A673 (cell line): ENCODE measurements at regions of chr4 and their contacts with region 1.

Region 1: DNA sequence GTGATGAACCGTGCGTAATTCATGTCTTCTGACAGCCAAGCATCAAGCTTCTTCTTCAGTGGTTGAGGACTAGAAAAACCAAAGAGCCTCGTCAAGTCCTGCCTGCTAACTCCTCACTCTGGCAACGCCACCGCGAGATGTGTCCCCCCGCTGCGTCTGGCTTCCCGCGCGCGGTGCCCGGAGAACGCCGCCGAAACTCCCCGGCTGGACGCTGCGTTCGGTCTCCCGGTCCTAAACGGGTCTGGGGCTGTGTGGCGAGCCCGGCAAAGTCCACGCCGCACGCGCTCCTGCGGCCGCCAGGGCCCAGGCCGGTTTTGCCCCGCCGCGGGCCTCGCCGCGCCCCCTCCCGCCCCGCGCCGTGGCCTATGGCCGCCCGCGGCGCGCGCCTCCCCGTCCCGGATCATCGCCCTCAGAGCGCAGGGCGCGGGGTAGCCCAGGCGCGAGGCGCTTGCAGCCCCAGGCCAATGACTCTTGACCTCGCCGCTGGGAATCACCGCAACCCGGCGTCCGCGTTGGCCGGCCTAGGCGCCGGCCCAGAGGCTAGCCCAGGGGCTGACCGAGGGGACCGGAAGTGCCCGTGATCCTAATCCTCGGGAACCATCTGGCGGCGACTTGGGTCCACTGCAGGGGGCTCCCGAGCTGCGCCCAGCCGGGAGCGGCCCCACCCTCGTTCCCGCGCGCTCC is at the start of gene AADAT:
- DNase-seq: peak; percentile 70
- H3K4me3 ChIP-seq: peak within 1 kb of the TSS; percentile 57
- H3K27ac ChIP-seq: peak within 1 kb of the TSS; percentile 38
- H3K4me1 ChIP-seq: peaks cover 33% of the 10 kb centered on the region
- H3K27me3 ChIP-seq: peaks cover 29% of the 10 kb centered on the region
- CTCF ChIP-seq: peak; percentile 74
- total RNA-seq, gene AADAT: 5.4 and 5.6 TPM in 2 replicates

Region 2: DNA sequence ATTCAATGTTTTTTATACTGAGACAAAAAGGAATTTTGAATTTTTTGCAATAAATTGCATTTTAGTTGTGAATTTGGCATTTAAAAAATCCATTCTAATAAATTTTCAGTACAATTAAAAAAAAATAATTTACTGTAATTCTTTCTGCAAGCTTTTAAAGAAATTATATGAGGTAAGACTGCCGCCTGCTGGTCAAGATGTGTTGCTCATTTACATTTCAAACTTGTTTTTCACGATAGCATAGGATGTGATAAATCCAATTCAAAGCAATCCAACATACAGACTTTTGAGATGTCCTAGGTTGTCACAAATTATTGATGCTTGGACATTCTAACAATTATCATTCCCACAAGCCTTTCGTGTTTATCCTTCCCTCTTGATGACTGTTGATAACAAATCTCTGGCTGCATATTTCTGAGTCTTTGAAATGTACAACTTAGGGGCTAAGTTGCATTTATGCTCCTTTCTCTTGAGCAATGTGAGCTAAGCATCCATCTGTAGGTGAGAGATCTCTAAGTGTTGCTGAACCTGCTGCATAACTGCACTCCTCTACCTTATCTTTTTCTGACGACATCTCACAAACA is 41.9 kb before region 1 on chr4:
- CTCF ChIA-PET with region 1: no interaction called
- POLR2A ChIA-PET with region 1: no interaction called
- intact Hi-C with region 1: loop called (anchors 2 kb)
- DNase-seq: peak; percentile 75
- H3K4me3 ChIP-seq: no peak overlapping the region
- H3K27ac ChIP-seq: no peak overlapping the region
- H3K4me1 ChIP-seq: peaks cover 3% of the 10 kb centered on the region
- H3K27me3 ChIP-seq: no peaks in the 10 kb centered on the region
- CTCF ChIP-seq: peak; percentile 82